ENCODE measurements at regions of chr2 and their contacts with region 1.

Region 1: DNA sequence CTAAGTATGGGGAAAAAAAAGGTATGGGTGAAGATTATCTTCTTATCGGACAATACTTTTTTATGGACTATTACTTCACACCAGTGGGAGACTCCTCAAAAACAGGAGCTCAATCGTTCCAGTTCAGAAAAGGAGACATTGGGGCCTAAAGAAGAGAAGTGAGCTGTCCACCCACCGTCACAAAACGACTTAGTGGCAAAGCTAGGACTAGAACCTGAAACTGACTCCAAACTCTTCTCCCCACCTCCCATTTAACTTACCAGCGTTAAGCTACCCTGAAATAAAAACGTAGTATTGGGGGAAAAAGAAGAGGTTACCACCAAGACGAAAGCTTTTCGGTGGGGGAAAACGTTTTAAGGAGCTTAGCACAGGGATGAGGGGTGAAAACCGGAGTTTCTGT is 503 bp downstream of the GTF3C3 start:
- DNase-seq: no peak
- H3K4me3 ChIP-seq: peak overlapping the region; percentile 19 to 97 (median 76)
- H3K27ac ChIP-seq: peak overlapping the region in 4 of 5 donors; percentile 0 to 86 (median 70)
- H3K4me1 ChIP-seq: peaks cover 6 to 35% of the 10 kb centered on the region in 2 donors
- H3K27me3 ChIP-seq: no peaks in the 10 kb centered on the region
- CTCF ChIP-seq: no peak
- POLR2A ChIP-seq: no peak

Region 2: GRCh38 chr2:196926562-196927375 is 127.8 kb after region 1 on chr2 and contains the start of gene PGAP1:
- intact Hi-C with region 1: loop called in 1 of 2 experiments (anchors 10 kb)
- DNase-seq: peak; percentile 88 to 93 (median 91)
- H3K4me3 ChIP-seq: peak within 1 kb of the TSS; percentile 68 to 80 (median 78)
- H3K27ac ChIP-seq: peak within 1 kb of the TSS; percentile 74 to 92 (median 86)
- H3K4me1 ChIP-seq: peaks cover 0 to 29% of the 10 kb centered on the region in 2 donors
- H3K27me3 ChIP-seq: no peaks in the 10 kb centered on the region
- CTCF ChIP-seq: no peak
- POLR2A ChIP-seq: peak; percentile 49 to 76
- total RNA-seq, gene PGAP1: 3.1 to 11.6 (median 7.5) TPM

Region 3: DNA sequence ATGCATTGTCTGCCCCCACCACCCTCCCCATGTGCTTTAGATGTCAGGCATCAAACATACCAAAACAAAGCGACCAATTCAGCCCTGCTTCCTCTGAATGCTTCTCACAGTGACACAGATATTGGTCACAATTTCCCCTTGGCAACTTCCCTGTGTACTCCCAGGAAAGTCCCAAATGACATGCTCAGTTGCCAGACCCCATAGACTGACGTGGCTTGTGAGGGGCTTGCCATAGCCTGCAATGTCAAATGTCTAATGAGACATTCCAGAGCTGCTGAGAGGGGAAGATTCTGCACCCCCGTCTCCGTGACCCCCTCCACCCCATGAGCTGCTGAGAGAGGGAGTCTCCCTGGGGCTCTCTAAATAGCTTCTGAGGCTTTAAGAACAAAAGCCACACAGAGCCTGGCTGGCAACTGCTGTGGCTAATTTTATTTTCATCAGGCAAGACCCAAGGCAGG is 829.1 kb after region 1 on chr2:
- intact Hi-C with region 1: no loop called
- DNase-seq: no peak
- H3K4me3 ChIP-seq: no peak overlapping the region
- H3K27ac ChIP-seq: no peak overlapping the region
- H3K4me1 ChIP-seq: no peaks in the 10 kb centered on the region
- H3K27me3 ChIP-seq: no peaks in the 10 kb centered on the region
- CTCF ChIP-seq: no peak
- POLR2A ChIP-seq: no peak